Activated B cell treated with CpG ODN at 0.5 μM for 24 hours (primary cell): ENCODE measurements at regions of chr19 and their contacts with region 1.

Region 1: GRCh38 chr19:6424939-6425731 is 524 bp upstream of the KHSRP start:
- DNase-seq: peak; percentile 92
- ATAC-seq: peak; percentile 83
- H3K4me3 Mint-ChIP-seq: peak overlapping the region; percentile 78
- H3K27ac Mint-ChIP-seq: peak overlapping the region; percentile 85
- H3K4me1 Mint-ChIP-seq: peaks cover 30% of the 10 kb centered on the region
- H3K27me3 Mint-ChIP-seq: no peaks in the 10 kb centered on the region
- CTCF ChIP-seq: no peak

Region 2: GRCh38 chr19:6199240-6199983 is 225.7 kb before region 1 on chr19:
- CTCF ChIA-PET with region 1: no interaction called
- POLR2A ChIA-PET with region 1: interaction called, 6 read pairs
- intact Hi-C with region 1: loop called (anchors 2 kb)
- DNase-seq: peak; percentile 99
- ATAC-seq: peak; percentile 86
- H3K4me3 Mint-ChIP-seq: peak overlapping the region; percentile 95
- H3K27ac Mint-ChIP-seq: peak overlapping the region; percentile 85
- H3K4me1 Mint-ChIP-seq: peaks cover 33% of the 10 kb centered on the region
- H3K27me3 Mint-ChIP-seq: no peaks in the 10 kb centered on the region
- CTCF ChIP-seq: no peak

Region 3: DNA sequence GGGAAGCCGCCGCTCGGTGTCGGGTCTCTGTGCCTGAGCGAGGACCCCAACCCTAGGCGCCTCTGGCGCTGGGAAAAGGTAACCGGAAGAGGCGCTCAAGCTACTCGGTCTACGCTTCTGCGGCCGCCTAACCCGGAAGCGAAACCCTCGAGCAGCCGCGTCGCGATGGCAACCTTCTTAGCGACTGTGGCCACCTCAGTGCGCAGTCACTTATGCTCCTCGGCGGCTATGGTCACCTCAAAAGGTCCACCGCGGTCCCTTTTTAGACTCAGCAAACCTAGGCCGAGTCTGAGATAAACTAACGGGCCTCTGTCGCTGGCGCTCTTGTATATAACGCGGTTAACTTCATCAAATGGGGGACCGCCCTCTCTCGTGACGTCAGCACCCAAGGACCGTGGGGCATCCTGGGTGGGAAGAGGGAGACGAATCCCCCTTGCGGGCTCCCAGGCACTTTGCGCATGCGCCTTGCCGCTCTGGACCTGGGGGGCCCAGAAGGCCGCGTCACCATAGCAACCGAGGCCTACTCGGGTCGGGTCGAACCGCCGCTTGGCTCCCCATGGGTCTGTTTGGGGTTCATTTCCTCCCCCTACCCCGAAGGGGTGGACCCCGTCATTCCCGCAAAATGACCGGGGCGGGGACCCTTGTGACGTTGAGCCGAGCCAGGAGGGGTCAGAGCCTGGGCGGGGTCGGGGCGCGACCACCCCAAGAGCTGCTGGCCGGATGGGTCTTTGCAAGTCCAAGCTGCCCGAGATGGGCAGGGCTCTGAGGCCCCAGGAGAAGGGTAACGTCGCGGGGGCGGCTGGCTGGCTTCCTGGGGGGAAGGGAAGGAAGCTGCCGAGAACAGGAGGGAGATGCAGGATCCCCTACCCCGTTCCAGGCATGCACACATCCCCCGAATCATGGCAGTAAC is 31.8 kb before region 1 on chr19 and contains the start of gene GTF2F1:
- CTCF ChIA-PET with region 1: no interaction called
- POLR2A ChIA-PET with region 1: interaction called, 15 read pairs
- intact Hi-C with region 1: loop called (anchors 1 kb)
- DNase-seq: peak; percentile 92
- ATAC-seq: peak; percentile 85
- H3K4me3 Mint-ChIP-seq: peak within 1 kb of the TSS; percentile 94
- H3K27ac Mint-ChIP-seq: peak within 1 kb of the TSS; percentile 94
- H3K4me1 Mint-ChIP-seq: peaks cover 23% of the 10 kb centered on the region
- H3K27me3 Mint-ChIP-seq: no peaks in the 10 kb centered on the region
- CTCF ChIP-seq: no peak
- total RNA-seq, gene GTF2F1: 67.6 and 68.1 TPM in 2 replicates

Region 4: GRCh38 chr19:6481541-6482342 is 56.6 kb after region 1 on chr19 and contains the start of gene DENND1C:
- CTCF ChIA-PET with region 1: no interaction called
- POLR2A ChIA-PET with region 1: interaction called, 16 read pairs
- intact Hi-C with region 1: loop called (anchors 1 kb)
- DNase-seq: peak; percentile 67
- ATAC-seq: peak; percentile 97
- H3K4me3 Mint-ChIP-seq: peak within 1 kb of the TSS; percentile 91
- H3K27ac Mint-ChIP-seq: peak within 1 kb of the TSS; percentile 89
- H3K4me1 Mint-ChIP-seq: peaks cover 29% of the 10 kb centered on the region
- H3K27me3 Mint-ChIP-seq: no peaks in the 10 kb centered on the region
- CTCF ChIP-seq: no peak
- total RNA-seq, gene DENND1C: 90.0 and 95.1 TPM in 2 replicates

Region 5: GRCh38 chr19:6577476-6578125 is 152.5 kb after region 1 on chr19:
- CTCF ChIA-PET with region 1: no interaction called
- POLR2A ChIA-PET with region 1: no interaction called
- intact Hi-C with region 1: loop called (anchors 10 kb)
- DNase-seq: peak; percentile 54
- ATAC-seq: peak; percentile 90
- H3K4me3 Mint-ChIP-seq: peak overlapping the region; percentile 68
- H3K27ac Mint-ChIP-seq: no peak overlapping the region
- H3K4me1 Mint-ChIP-seq: peaks cover 6% of the 10 kb centered on the region
- H3K27me3 Mint-ChIP-seq: no peaks in the 10 kb centered on the region
- CTCF ChIP-seq: no peak